IMR-90 (cell line): ENCODE measurements at regions of chr6 and their contacts with region 1.

Region 1: DNA sequence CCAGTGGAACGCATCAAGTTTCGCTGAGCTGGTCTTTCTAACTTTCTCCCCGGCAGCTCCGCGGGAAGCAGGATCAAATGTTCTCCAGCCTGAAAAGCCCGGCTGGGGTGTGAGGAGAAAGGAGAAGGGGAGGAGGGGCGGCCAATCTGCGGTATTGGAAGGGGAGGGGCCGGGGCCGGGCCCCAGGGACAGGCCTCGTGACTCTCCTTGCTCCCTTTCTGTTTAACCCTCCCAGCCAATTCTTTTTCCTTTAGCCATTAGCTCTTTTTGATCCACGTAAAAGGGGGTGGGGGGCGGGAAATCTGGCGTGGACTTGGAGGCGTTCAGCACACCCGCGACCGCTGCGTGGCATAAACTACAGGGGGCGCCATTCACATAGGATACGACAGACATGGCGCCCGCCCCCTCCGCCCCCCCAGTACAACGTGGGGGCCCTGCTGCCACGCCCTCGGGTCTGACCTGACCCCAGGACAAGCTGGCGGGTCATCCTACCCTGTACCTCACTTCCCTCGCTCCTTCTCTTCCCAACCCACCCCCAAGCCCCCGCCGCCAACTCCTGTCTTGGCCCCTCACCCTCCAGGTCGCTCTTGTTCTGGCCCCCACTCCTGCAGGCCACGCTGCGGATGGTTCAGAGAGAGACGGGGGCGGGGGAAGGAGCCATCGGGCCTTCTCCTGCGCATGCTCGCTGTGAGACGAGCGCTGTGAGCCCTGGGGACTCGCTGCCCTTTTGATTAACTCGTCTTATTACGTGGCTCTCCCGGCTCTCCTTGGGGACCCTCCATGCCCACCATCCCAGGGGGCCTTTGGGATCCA is 7.8 kb upstream of the MDGA1 start:
- DNase-seq: peak; percentile 73
- ATAC-seq: peak; percentile 81
- H3K4me3 ChIP-seq: peak overlapping the region; percentile 20
- H3K27ac ChIP-seq: peak overlapping the region; percentile 12
- H3K4me1 ChIP-seq: peaks cover 2% of the 10 kb centered on the region
- H3K27me3 ChIP-seq: no peaks in the 10 kb centered on the region
- CTCF ChIP-seq: peak; percentile 68
- POLR2A ChIP-seq: no peak
- RAD21 ChIP-seq: peak; percentile 66

Region 2: GRCh38 chr6:37791156-37791919 is 85.9 kb after region 1 on chr6:
- CTCF ChIA-PET with region 1: no interaction called
- POLR2A ChIA-PET with region 1: no interaction called
- dilution Hi-C with region 1: no loop called
- in situ Hi-C with region 1: no loop called
- intact Hi-C with region 1: loop called (anchors 5 kb)
- DNase-seq: peak; percentile 98
- ATAC-seq: peak; percentile 97
- H3K4me3 ChIP-seq: no peak overlapping the region
- H3K27ac ChIP-seq: no peak overlapping the region
- H3K4me1 ChIP-seq: peaks cover 9% of the 10 kb centered on the region; the same call in 1 of the 2 replicates
- H3K27me3 ChIP-seq: no peaks in the 10 kb centered on the region
- CTCF ChIP-seq: peak; percentile 96
- POLR2A ChIP-seq: no peak
- RAD21 ChIP-seq: peak; percentile 94

Region 3: DNA sequence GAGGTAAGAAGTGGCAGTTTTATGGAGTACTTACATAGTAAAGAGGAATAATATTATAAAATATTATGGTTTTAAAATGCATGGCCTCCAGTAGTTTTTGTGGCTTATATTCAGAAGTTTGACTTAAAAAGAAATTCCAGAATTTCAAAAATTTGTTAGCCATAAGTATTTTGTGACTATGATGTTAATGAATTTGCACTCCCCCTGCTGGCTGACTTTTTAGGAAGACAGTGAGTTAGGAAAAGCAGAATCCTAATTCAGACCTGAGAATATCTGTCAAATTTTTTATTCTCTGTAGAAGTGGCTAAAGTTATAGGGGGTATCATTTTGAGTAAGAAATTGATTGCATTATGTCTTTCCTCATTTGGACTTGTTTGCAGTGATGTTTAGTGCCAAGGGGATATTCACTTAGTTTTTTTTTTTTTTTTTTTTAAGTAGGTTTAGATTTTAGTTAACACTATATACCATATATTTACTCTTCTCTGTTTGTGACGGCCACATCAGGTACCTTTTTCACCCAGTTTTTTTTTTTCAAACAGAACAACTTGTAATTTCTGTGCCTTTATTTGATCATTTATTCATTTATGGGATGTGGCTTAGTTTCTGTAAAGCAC is 154.9 kb after region 1 on chr6:
- CTCF ChIA-PET with region 1: interaction called, 5 read pairs
- POLR2A ChIA-PET with region 1: no interaction called
- dilution Hi-C with region 1: no loop called
- in situ Hi-C with region 1: no loop called
- intact Hi-C with region 1: loop called (anchors 1 kb)
- DNase-seq: peak; percentile 65
- ATAC-seq: peak; percentile 53; the same call in 1 of the 2 replicates
- H3K4me3 ChIP-seq: no peak overlapping the region
- H3K27ac ChIP-seq: no peak overlapping the region
- H3K4me1 ChIP-seq: peaks cover 5% of the 10 kb centered on the region
- H3K27me3 ChIP-seq: no peaks in the 10 kb centered on the region
- CTCF ChIP-seq: peak; percentile 66
- POLR2A ChIP-seq: no peak
- RAD21 ChIP-seq: peak; percentile 58

Region 4: DNA sequence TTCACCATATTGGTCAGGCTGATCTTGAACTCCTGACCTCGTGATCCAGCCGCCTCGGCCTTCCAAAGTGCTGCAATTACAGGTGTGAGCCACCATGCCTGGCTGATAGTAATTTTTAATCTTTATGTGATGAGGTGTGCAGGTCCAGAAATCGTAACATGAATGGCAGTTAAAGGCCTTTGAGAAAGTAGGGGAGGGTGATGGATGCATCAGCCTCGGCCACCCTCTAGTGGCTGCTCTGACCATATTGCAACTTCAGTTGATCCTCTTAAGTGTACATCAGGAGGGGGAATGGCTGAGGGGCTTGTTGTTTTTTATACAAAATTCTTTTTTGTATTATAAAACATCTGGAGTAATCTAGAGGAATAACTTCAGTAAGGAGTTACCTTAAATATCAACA is 307.1 kb after region 1 on chr6:
- CTCF ChIA-PET with region 1: no interaction called
- POLR2A ChIA-PET with region 1: no interaction called
- dilution Hi-C with region 1: no loop called
- in situ Hi-C with region 1: loop called (anchors 10 kb)
- intact Hi-C with region 1: loop called (anchors 1 kb)
- DNase-seq: peak; percentile 67
- ATAC-seq: peak; percentile 83
- H3K4me3 ChIP-seq: no peak overlapping the region
- H3K27ac ChIP-seq: no peak overlapping the region
- H3K4me1 ChIP-seq: peaks cover 4% of the 10 kb centered on the region; the same call in 1 of the 2 replicates
- H3K27me3 ChIP-seq: no peaks in the 10 kb centered on the region
- CTCF ChIP-seq: peak; percentile 75
- POLR2A ChIP-seq: no peak
- RAD21 ChIP-seq: peak; percentile 88

Region 5: GRCh38 chr6:38493931-38494547 is 788.6 kb after region 1 on chr6:
- CTCF ChIA-PET with region 1: interaction called, 3 read pairs
- POLR2A ChIA-PET with region 1: no interaction called
- dilution Hi-C with region 1: no loop called
- in situ Hi-C with region 1: loop called (anchors 5 kb)
- intact Hi-C with region 1: no loop called
- DNase-seq: peak; percentile 81
- ATAC-seq: peak; percentile 27; the same call in 1 of the 2 replicates
- H3K4me3 ChIP-seq: no peak overlapping the region
- H3K27ac ChIP-seq: no peak overlapping the region
- H3K4me1 ChIP-seq: no peaks in the 10 kb centered on the region
- H3K27me3 ChIP-seq: no peaks in the 10 kb centered on the region
- CTCF ChIP-seq: peak; percentile 90
- POLR2A ChIP-seq: no peak
- RAD21 ChIP-seq: peak; percentile 96

Region 6: DNA sequence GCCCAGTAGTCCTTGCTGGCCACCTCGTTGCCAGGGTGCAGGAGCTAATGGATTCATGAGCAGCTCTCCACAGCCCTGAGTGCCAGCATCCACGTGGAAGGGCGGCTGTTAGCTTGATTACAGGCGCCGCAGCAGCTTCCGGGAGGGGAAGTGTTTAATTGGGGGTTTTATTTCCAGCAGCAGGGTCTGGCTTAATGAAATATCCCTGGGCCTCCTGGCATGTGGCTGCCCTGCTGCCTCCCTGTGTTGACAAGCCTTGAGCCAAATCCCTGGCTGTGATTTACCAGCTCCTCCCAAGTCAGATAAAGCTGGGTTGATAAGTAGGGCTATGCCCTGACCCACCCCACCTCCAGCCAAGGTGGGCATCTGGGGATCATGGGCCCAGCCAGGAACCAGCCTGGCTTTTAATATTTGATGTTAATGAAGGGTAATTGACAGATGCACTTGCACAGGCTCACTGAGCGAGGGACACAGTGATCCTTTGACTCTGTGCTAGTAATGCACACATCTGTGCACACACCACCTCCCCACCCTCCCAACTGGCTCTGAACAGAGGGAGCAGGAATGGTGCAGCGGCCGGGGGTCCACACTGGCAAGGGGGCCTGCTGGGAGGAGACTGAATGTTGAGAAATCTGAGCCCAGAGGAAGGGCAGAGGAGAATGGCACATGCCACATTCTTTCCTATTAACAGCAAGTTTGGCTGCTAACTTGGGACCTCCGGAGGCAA is 1356.7 kb after region 1 on chr6:
- CTCF ChIA-PET with region 1: no interaction called
- POLR2A ChIA-PET with region 1: no interaction called
- dilution Hi-C with region 1: no loop called
- in situ Hi-C with region 1: no loop called
- intact Hi-C with region 1: no loop called
- DNase-seq: no peak
- ATAC-seq: no peak
- H3K4me3 ChIP-seq: no peak overlapping the region
- H3K27ac ChIP-seq: no peak overlapping the region
- H3K4me1 ChIP-seq: no peaks in the 10 kb centered on the region
- H3K27me3 ChIP-seq: peaks cover 14% of the 10 kb centered on the region
- CTCF ChIP-seq: no peak
- POLR2A ChIP-seq: no peak
- RAD21 ChIP-seq: no peak